Right ventricle myocardium superior (tissue), 1 donor: ENCODE measurements at regions of chr22 and their contacts with region 1.

Region 1: GRCh38 chr22:31749636-31750364 is at the start of gene PRR14L:
- DNase-seq: peak; percentile 99
- ATAC-seq: peak; percentile 90
- total RNA-seq, gene PRR14L: 17.8 TPM

Region 2: DNA sequence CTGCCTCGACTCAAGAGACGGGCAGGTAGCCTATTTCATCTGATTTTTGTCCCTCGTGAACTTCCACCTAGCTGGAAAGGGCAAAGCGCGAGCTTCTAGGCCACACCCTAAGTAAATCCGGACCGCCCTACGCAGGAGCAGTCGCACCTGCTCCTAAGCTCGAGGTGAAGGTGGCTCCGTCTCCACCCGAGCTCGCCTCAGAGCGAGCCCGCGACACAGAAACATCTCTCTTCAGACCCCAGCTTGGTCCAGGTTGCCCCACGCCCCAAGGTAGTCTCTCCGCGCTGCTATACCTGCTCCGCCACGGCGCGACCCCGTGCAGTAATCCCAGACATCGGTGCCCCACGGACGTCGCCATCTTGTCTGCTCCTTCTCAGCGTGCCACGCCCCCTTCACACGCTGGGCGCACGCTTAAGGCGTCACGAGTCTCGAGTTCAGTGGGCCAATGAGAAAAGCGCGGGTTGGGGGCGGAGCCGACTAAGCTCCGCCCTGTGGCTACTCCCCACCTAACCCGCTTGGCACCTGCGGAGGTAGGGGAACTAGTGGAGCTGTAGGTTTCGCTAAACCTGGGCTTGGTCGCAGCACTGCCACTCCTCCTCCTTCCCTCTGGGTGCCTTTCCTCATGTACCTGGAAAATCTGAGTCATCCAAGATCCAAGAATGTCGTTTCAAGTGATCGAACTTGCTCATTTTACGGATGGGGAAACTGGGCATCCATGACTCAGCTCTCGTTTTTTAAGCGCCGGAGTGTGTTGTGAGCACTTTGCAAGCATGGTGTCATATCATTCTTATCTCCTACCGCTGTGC is 87.7 kb before region 1 on chr22 and contains the start of gene PISD:
- intact Hi-C with region 1: loop called (anchors 10 kb)
- DNase-seq: peak; percentile 98
- ATAC-seq: peak; percentile 100
- total RNA-seq, gene PISD: 16.6 TPM

Region 3: GRCh38 chr22:31943976-31944699 is 194.3 kb after region 1 on chr22 and contains the start of gene YWHAH:
- intact Hi-C with region 1: loop called (anchors 10 kb)
- DNase-seq: peak; percentile 98
- ATAC-seq: peak; percentile 95
- total RNA-seq, gene YWHAH: 67.5 TPM